ENCODE measurements at regions of chr11 and their contacts with region 1.

Region 1: DNA sequence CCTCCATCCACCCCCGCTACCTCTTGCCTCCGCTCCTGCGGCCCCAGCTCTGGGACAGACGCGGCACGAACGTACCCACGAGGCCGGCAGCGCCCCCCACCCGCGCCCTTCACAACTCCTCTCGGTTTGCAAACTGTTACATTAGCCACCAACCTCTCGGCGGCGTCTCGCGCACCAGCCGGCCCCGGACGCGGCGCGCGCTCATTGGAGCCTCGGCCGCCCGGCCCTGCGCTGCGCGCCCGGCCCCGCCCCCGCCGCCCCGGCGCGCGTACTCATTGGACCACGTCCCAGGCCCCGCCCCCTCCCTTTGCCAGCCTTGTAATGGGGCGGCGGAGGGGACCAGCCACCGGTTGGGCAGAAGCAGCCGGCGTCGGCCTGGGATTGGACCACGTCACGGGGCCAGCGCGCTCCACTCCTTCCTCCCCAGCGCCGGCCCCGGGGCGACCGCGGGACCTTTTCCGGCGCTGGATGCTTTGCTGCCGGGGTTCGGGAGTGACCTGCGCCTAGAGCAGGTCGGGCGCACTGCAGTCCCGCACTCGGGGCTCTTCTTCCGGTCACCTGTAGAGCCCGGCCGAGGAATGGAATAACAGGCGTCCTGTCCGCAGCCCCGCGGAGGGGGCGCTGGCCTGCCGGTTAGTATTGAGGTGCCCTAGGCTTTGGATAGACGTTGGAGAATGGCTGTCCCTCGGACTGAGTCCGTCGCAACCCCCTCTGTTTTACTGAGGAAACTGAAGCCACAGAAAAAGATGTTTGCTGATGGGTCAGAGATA is at the start of gene HYOU1:
- DNase-seq: peak; percentile 87 to 97
- H3K4me3 ChIP-seq: peak within 1 kb of the TSS; percentile 76 to 98 (median 89)
- H3K27ac ChIP-seq: peak within 1 kb of the TSS; percentile 82
- H3K4me1 ChIP-seq: peaks cover 0 to 8% (median 3%) of the 10 kb centered on the region in 4 experiments; a peak in 5 of 7 replicates
- H3K27me3 ChIP-seq: no peaks in the 10 kb centered on the region
- CTCF ChIP-seq: peak; percentile 28 to 42 (median 40)
- EP300 ChIP-seq: no peak
- POLR2A ChIP-seq: peak; percentile 42 to 66; a peak in 2 of 3 replicates
- RAD21 ChIP-seq: peak in 1 of 2 experiments; percentile 14; a peak in 1 of 4 replicates
- total RNA-seq, gene HYOU1: 293 and 295 TPM in 2 replicates

Region 2: GRCh38 chr11:119018074-119018938 is 38.9 kb before region 1 on chr11 and contains the starts of genes RPS25 and TRAPPC4:
- CTCF ChIA-PET with region 1: no interaction called
- POLR2A ChIA-PET with region 1: interaction called, 27 read pairs
- DNase-seq: peak; percentile 88 to 90
- H3K4me3 ChIP-seq: peak within 1 kb of the TSS; percentile 93 to 99 (median 95)
- H3K27ac ChIP-seq: peak within 1 kb of the TSS; percentile 84
- H3K4me1 ChIP-seq: peaks cover 0 to 9% (median 2%) of the 10 kb centered on the region in 4 experiments; a peak in 4 of 7 replicates
- H3K27me3 ChIP-seq: no peaks in the 10 kb centered on the region
- CTCF ChIP-seq: no peak
- EP300 ChIP-seq: peak in 1 of 2 experiments; percentile 22; a peak in 1 of 3 replicates
- POLR2A ChIP-seq: peak; percentile 91 to 95
- RAD21 ChIP-seq: no peak
- total RNA-seq, gene RPS25: 1,525 and 1,551 TPM in 2 replicates
- total RNA-seq, gene TRAPPC4: 88.6 and 94.3 TPM in 2 replicates

Region 3: GRCh38 chr11:119023741-119024140 is 33.4 kb before region 1 on chr11:
- CTCF ChIA-PET with region 1: interaction called, 3 read pairs
- POLR2A ChIA-PET with region 1: interaction called, 27 read pairs
- DNase-seq: no peak
- H3K4me3 ChIP-seq: no peak overlapping the region
- H3K27ac ChIP-seq: no peak overlapping the region
- H3K4me1 ChIP-seq: peaks cover 0 to 5% (median 3%) of the 10 kb centered on the region in 4 experiments; a peak in 6 of 7 replicates
- H3K27me3 ChIP-seq: no peaks in the 10 kb centered on the region
- CTCF ChIP-seq: no peak
- EP300 ChIP-seq: no peak
- POLR2A ChIP-seq: no peak
- RAD21 ChIP-seq: no peak

Region 4: GRCh38 chr11:119030329-119031049 is 26.7 kb before region 1 on chr11 and contains the start of gene SLC37A4:
- CTCF ChIA-PET with region 1: interaction called, 9 read pairs
- POLR2A ChIA-PET with region 1: interaction called, 18 read pairs
- DNase-seq: peak; percentile 98 to 100
- H3K4me3 ChIP-seq: peak within 1 kb of the TSS; percentile 64 to 84 (median 74)
- H3K27ac ChIP-seq: peak within 1 kb of the TSS; percentile 89
- H3K4me1 ChIP-seq: peaks cover 6 to 13% (median 10%) of the 10 kb centered on the region in 4 experiments
- H3K27me3 ChIP-seq: no peaks in the 10 kb centered on the region
- CTCF ChIP-seq: peak; percentile 77 to 98 (median 93)
- EP300 ChIP-seq: no peak
- POLR2A ChIP-seq: peak in 1 of 2 experiments; percentile 83; a peak in 2 of 3 replicates
- RAD21 ChIP-seq: peak; percentile 54 to 59
- total RNA-seq, gene SLC37A4: 29.0 and 35.1 TPM in 2 replicates

Region 5: DNA sequence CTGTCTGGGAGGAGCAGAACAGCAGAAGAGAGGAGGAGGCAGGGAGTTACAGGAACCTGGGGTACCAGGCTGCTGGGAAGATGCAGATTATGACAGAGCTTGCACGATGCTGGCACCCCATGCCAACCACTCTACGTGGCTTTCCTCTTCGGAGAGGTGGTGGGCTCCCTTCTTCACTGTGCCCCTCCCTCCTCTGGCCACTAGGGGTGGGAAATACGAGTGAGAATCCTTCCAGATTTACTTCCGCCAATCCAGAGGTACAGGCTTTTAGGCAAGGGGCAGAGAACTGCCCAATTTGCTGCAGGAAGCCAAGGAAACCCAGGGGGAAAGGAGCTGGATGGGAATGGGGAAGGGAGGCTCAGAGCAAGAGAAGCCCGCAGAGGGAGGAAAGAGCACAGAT is 12.5 kb before region 1 on chr11:
- CTCF ChIA-PET with region 1: interaction called, 8 read pairs
- POLR2A ChIA-PET with region 1: interaction called, 45 read pairs
- DNase-seq: no peak
- H3K4me3 ChIP-seq: no peak overlapping the region
- H3K27ac ChIP-seq: no peak overlapping the region
- H3K4me1 ChIP-seq: peaks cover 0 to 3% (median 1%) of the 10 kb centered on the region in 4 experiments; a peak in 3 of 7 replicates
- H3K27me3 ChIP-seq: no peaks in the 10 kb centered on the region
- CTCF ChIP-seq: peak; percentile 38 to 63 (median 38)
- EP300 ChIP-seq: no peak
- POLR2A ChIP-seq: no peak
- RAD21 ChIP-seq: no peak

Region 6: DNA sequence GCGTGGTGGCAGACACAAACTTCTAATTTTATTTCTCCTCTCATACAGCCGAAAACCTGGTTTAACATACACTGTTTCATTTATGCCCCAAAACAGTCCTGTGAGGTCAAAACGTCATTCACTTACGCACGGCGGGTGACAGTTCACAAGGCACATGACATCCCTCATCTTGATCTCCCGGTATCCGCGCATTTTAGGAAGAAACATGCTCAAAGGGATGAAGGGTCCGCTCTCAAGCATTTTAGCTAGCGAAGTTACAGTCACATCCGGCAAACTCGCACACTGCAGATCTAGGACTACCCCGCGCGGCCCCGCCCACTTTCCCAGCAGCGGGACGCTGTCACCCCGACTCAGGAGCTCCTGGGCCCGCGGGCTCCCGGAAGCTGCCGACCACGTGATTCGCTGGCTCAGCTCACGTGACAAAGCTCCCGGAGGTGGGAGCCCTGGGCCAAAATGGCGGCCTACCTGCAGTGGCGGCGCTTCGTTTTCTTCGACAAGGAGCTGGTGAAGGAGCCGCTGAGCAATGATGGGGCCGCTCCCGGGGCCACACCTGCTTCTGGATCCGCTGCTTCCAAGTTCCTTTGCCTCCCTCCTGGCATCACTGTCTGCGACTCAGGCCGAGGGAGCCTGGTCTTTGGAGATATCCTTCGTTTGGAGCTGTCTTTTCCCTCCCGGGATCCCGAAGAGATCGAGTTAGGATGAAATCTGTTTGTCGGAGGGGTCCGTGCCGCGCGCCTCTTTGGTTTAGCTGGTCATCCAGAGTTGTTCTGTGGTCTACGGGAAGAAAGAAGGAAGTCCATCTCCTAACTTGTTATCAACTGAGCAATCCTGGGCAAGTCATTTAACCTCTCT is 10.4 kb after region 1 on chr11 and contains the start of gene VPS11:
- CTCF ChIA-PET with region 1: interaction called, 5 read pairs
- POLR2A ChIA-PET with region 1: interaction called, 24 read pairs
- DNase-seq: peak; percentile 87 to 96
- H3K4me3 ChIP-seq: peak within 1 kb of the TSS; percentile 82 to 100 (median 98)
- H3K27ac ChIP-seq: peak within 1 kb of the TSS; percentile 82
- H3K4me1 ChIP-seq: no peaks in the 10 kb centered on the region; a peak in 1 of 7 replicates
- H3K27me3 ChIP-seq: no peaks in the 10 kb centered on the region
- CTCF ChIP-seq: no peak
- EP300 ChIP-seq: no peak
- POLR2A ChIP-seq: peak; percentile 43 to 91
- RAD21 ChIP-seq: no peak
- total RNA-seq, gene VPS11: 15.5 and 16.6 TPM in 2 replicates

Region 7: GRCh38 chr11:119084663-119085436 is 27.7 kb after region 1 on chr11 and contains the start of gene HMBS:
- CTCF ChIA-PET with region 1: interaction called, 4 read pairs
- POLR2A ChIA-PET with region 1: interaction called, 14 read pairs
- DNase-seq: peak; percentile 75 to 97
- H3K4me3 ChIP-seq: peak within 1 kb of the TSS; percentile 78 to 97 (median 86)
- H3K27ac ChIP-seq: peak within 1 kb of the TSS; percentile 98
- H3K4me1 ChIP-seq: peaks cover 0 to 5% (median 2%) of the 10 kb centered on the region in 4 experiments; a peak in 2 of 7 replicates
- H3K27me3 ChIP-seq: no peaks in the 10 kb centered on the region
- CTCF ChIP-seq: no peak
- EP300 ChIP-seq: no peak
- POLR2A ChIP-seq: peak; percentile 68 to 95
- RAD21 ChIP-seq: no peak; a peak in 1 of 4 replicates
- total RNA-seq, gene HMBS: 65.5 and 69.3 TPM in 2 replicates

Region 8: GRCh38 chr11:119666463-119667131 is 609.4 kb after region 1 on chr11:
- CTCF ChIA-PET with region 1: no interaction called
- POLR2A ChIA-PET with region 1: no interaction called
- DNase-seq: peak; percentile 69 to 92
- H3K4me3 ChIP-seq: no peak overlapping the region
- H3K27ac ChIP-seq: no peak overlapping the region
- H3K4me1 ChIP-seq: peaks cover 2 to 19% (median 15%) of the 10 kb centered on the region in 4 experiments; a peak in 6 of 7 replicates
- H3K27me3 ChIP-seq: no peaks in the 10 kb centered on the region
- CTCF ChIP-seq: peak; percentile 92 to 99 (median 96)
- EP300 ChIP-seq: no peak
- POLR2A ChIP-seq: no peak
- RAD21 ChIP-seq: peak; percentile 99

Measured in H1 (cell line).